Caco-2 (cell line): ENCODE measurements at regions of chr22 and their contacts with region 1.

Region 1: GRCh38 chr22:32796865-32797573 is 4.5 kb upstream of the TIMP3 start:
- DNase-seq: peak; percentile 58 to 63
- H3K4me3 ChIP-seq: no peak overlapping the region
- H3K4me3 Mint-ChIP-seq: no peak overlapping the region
- H3K27ac Mint-ChIP-seq: peak overlapping the region; percentile 17
- H3K4me1 ChIP-seq: peaks cover 6% of the 10 kb centered on the region
- H3K4me1 Mint-ChIP-seq: no peaks in the 10 kb centered on the region
- H3K27me3 ChIP-seq: no peaks in the 10 kb centered on the region
- H3K27me3 Mint-ChIP-seq: no peaks in the 10 kb centered on the region
- CTCF ChIP-seq: peak; percentile 68 to 72

Region 2: GRCh38 chr22:32603656-32604435 is 193.2 kb before region 1 on chr22:
- CTCF ChIA-PET with region 1: no interaction called
- POLR2A ChIA-PET with region 1: no interaction called
- intact Hi-C with region 1: no loop called
- DNase-seq: no peak
- H3K4me3 ChIP-seq: no peak overlapping the region
- H3K4me3 Mint-ChIP-seq: no peak overlapping the region
- H3K27ac Mint-ChIP-seq: peak overlapping the region; percentile 5
- H3K4me1 ChIP-seq: peaks cover 9% of the 10 kb centered on the region
- H3K4me1 Mint-ChIP-seq: peaks cover 21% of the 10 kb centered on the region
- H3K27me3 ChIP-seq: no peaks in the 10 kb centered on the region
- H3K27me3 Mint-ChIP-seq: no peaks in the 10 kb centered on the region
- CTCF ChIP-seq: no peak

Region 3: DNA sequence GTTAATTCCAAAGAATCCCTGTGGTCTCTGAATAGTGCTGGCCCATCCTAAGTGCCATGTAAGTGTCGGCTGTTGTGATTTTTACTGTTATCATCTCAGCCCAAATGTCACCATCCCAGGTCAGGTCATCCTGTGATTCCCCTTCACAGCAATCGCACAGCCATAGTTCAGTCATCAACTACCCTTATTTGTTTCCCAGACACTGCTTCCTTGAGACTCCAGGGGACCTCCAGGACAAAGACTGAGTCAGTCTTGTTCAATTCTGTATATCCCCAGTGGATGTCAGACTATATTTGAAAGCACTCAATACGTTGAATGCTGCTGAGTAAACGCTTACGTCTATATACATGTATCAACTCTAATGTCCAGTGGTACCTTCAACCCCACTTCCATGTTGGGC is 109.2 kb before region 1 on chr22:
- CTCF ChIA-PET with region 1: no interaction called
- POLR2A ChIA-PET with region 1: no interaction called
- intact Hi-C with region 1: no loop called
- DNase-seq: no peak
- H3K4me3 ChIP-seq: no peak overlapping the region
- H3K4me3 Mint-ChIP-seq: no peak overlapping the region
- H3K27ac Mint-ChIP-seq: no peak overlapping the region
- H3K4me1 ChIP-seq: peaks cover 21% of the 10 kb centered on the region
- H3K4me1 Mint-ChIP-seq: peaks cover 17% of the 10 kb centered on the region
- H3K27me3 ChIP-seq: no peaks in the 10 kb centered on the region
- H3K27me3 Mint-ChIP-seq: no peaks in the 10 kb centered on the region
- CTCF ChIP-seq: no peak

Region 4: DNA sequence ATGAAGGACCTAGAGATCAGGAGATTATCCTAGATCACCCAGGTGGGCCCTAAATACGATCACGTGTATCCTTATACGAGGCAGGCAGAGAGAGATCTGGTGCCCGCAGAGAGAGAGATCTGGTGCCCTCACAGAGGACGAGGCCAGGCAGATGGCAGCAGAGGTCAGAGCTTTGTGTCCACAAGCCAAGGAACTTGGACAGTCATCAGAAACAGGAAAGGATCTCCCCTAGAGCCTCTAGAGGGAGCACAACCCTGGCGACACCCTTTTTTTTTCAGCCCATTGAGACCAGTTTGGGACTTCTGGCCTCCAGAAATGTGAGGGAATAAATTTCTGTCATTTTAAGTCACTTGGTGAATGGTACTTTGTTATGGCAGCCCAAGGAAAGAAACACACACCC is 21.1 kb before region 1 on chr22:
- CTCF ChIA-PET with region 1: interaction called, 11 read pairs
- POLR2A ChIA-PET with region 1: interaction called, 9 read pairs
- intact Hi-C with region 1: loop called (anchors 1 kb)
- DNase-seq: peak; percentile 50 to 58
- H3K4me3 ChIP-seq: no peak overlapping the region
- H3K4me3 Mint-ChIP-seq: no peak overlapping the region
- H3K27ac Mint-ChIP-seq: no peak overlapping the region
- H3K4me1 ChIP-seq: peaks cover 11% of the 10 kb centered on the region
- H3K4me1 Mint-ChIP-seq: peaks cover 12% of the 10 kb centered on the region
- H3K27me3 ChIP-seq: no peaks in the 10 kb centered on the region
- H3K27me3 Mint-ChIP-seq: no peaks in the 10 kb centered on the region
- CTCF ChIP-seq: peak; percentile 61 to 71

Region 5: DNA sequence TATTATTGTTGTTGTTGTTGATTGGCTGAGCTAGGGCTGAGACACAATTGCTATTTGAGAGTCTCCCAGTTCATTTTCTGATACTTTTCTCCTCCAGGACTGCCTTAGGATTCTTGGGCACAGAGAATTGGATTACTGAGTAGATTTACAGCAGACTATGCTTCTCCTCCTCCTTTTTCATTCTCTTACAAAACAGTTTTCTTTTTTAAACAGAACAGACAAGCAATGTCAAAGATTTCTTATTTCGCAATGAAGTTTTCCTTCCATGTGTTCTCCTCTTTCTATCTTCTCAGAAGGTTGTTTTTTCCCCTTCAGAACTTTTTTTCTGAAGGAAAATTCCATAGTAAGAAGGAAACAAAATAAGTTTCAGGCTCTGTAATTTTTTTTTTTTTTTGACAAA is 15.3 kb before region 1 on chr22:
- CTCF ChIA-PET with region 1: interaction called, 11 read pairs
- POLR2A ChIA-PET with region 1: interaction called, 9 read pairs
- intact Hi-C with region 1: loop called (anchors 1 kb)
- DNase-seq: no peak
- H3K4me3 ChIP-seq: no peak overlapping the region
- H3K4me3 Mint-ChIP-seq: no peak overlapping the region
- H3K27ac Mint-ChIP-seq: no peak overlapping the region
- H3K4me1 ChIP-seq: peaks cover 14% of the 10 kb centered on the region
- H3K4me1 Mint-ChIP-seq: peaks cover 31% of the 10 kb centered on the region
- H3K27me3 ChIP-seq: no peaks in the 10 kb centered on the region
- H3K27me3 Mint-ChIP-seq: no peaks in the 10 kb centered on the region
- CTCF ChIP-seq: no peak

Region 6: DNA sequence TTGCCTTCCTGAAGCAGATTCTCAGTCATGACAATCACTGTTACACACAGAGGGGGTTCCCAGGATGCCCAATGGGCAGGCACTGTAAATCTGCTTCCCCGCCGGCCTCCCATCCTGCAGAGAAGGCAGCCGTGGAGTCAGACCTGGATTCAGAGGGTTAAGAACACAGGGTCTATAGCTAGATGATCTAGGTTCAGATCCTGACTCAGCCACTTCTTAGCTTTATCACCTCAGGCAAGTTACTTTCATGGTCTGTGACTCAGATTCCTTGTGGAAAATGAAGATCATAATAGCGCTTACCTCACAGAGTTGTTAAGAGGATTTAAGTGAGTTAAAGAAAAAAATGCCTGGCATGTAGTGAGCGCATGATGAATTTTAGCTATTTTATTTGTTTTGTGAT is 100.4 kb after region 1 on chr22:
- CTCF ChIA-PET with region 1: no interaction called
- POLR2A ChIA-PET with region 1: no interaction called
- intact Hi-C with region 1: no loop called
- DNase-seq: no peak
- H3K4me3 ChIP-seq: no peak overlapping the region
- H3K4me3 Mint-ChIP-seq: no peak overlapping the region
- H3K27ac Mint-ChIP-seq: no peak overlapping the region
- H3K4me1 ChIP-seq: peaks cover 7% of the 10 kb centered on the region
- H3K4me1 Mint-ChIP-seq: peaks cover 6% of the 10 kb centered on the region
- H3K27me3 ChIP-seq: no peaks in the 10 kb centered on the region
- H3K27me3 Mint-ChIP-seq: peaks cover under 1% of the 10 kb centered on the region
- CTCF ChIP-seq: no peak